ENCODE measurements at regions of chr7 and their contacts with region 1.

Region 1: GRCh38 chr7:55132890-55133551 is 114.2 kb downstream of the EGFR start:
- DNase-seq: peak; percentile 98 to 100
- H3K4me3 ChIP-seq: peak overlapping the region; percentile 39
- H3K27ac ChIP-seq: peak overlapping the region; percentile 92
- H3K4me1 ChIP-seq: peaks cover 77% of the 10 kb centered on the region
- H3K27me3 ChIP-seq: no peaks in the 10 kb centered on the region
- CTCF ChIP-seq: no peak

Region 2: GRCh38 chr7:54831644-54832099 is 301.3 kb before region 1 on chr7:
- CTCF ChIA-PET with region 1: no interaction called
- POLR2A ChIA-PET with region 1: interaction called, 5 read pairs
- intact Hi-C with region 1: loop called (anchors 1 kb)
- DNase-seq: peak; percentile 86 to 100
- H3K4me3 ChIP-seq: peak overlapping the region; percentile 39; the same call in 1 of the 2 replicates
- H3K27ac ChIP-seq: peak overlapping the region; percentile 94
- H3K4me1 ChIP-seq: peaks cover 45% of the 10 kb centered on the region
- H3K27me3 ChIP-seq: no peaks in the 10 kb centered on the region
- CTCF ChIP-seq: no peak; the same call in none of the 2 replicates

Region 3: DNA sequence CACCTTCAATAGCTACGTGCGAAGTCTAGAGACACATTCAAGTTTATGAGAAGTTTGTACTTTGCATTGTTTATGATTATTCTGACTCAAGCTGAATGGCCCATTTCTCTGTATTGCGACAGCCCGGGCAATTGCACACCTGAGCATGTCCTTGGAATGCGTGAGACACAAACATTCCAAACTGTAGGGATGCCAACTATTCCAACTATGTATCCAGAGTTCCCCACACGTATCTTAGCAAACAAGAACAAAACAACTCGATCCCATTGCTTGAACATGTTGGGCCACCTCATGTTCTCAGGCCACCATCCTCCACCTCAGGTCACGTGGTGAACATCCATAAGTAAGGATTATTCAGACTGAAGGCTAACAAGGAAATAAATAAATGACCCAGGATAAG is 165.6 kb before region 1 on chr7:
- CTCF ChIA-PET with region 1: no interaction called
- POLR2A ChIA-PET with region 1: interaction called, 6 read pairs
- intact Hi-C with region 1: loop called (anchors 1 kb)
- DNase-seq: peak; percentile 92 to 100
- H3K4me3 ChIP-seq: peak overlapping the region; percentile 2; the same call in 1 of the 2 replicates
- H3K27ac ChIP-seq: peak overlapping the region; percentile 89
- H3K4me1 ChIP-seq: peaks cover 50% of the 10 kb centered on the region
- H3K27me3 ChIP-seq: no peaks in the 10 kb centered on the region
- CTCF ChIP-seq: no peak

Region 4: GRCh38 chr7:55073945-55074499 is 59.0 kb before region 1 on chr7:
- CTCF ChIA-PET with region 1: interaction called, 4 read pairs
- POLR2A ChIA-PET with region 1: interaction called, 16 read pairs
- intact Hi-C with region 1: loop called (anchors 1 kb)
- DNase-seq: peak; percentile 94 to 100
- H3K4me3 ChIP-seq: peak overlapping the region; percentile 32; the same call in 1 of the 2 replicates
- H3K27ac ChIP-seq: peak overlapping the region; percentile 86
- H3K4me1 ChIP-seq: peaks cover 45% of the 10 kb centered on the region
- H3K27me3 ChIP-seq: no peaks in the 10 kb centered on the region
- CTCF ChIP-seq: no peak

Region 5: GRCh38 chr7:55120481-55121198 is 12.4 kb before region 1 on chr7:
- CTCF ChIA-PET with region 1: interaction called, 3 read pairs
- POLR2A ChIA-PET with region 1: interaction called, 24 read pairs
- intact Hi-C with region 1: loop called (anchors 1 kb)
- DNase-seq: peak; percentile 71 to 98
- H3K4me3 ChIP-seq: peak overlapping the region; percentile 3; the same call in 1 of the 2 replicates
- H3K27ac ChIP-seq: peak overlapping the region; percentile 79
- H3K4me1 ChIP-seq: peaks cover 77% of the 10 kb centered on the region
- H3K27me3 ChIP-seq: no peaks in the 10 kb centered on the region
- CTCF ChIP-seq: no peak

Region 6: GRCh38 chr7:55245271-55245723 is 112.3 kb after region 1 on chr7:
- CTCF ChIA-PET with region 1: no interaction called
- POLR2A ChIA-PET with region 1: no interaction called
- intact Hi-C with region 1: loop called (anchors 2 kb)
- DNase-seq: peak; percentile 63 to 72
- H3K4me3 ChIP-seq: no peak overlapping the region
- H3K27ac ChIP-seq: no peak overlapping the region
- H3K4me1 ChIP-seq: peaks cover 17% of the 10 kb centered on the region
- H3K27me3 ChIP-seq: no peaks in the 10 kb centered on the region
- CTCF ChIP-seq: no peak

Region 7: GRCh38 chr7:55288070-55288824 is 155.2 kb after region 1 on chr7:
- CTCF ChIA-PET with region 1: no interaction called
- POLR2A ChIA-PET with region 1: no interaction called
- intact Hi-C with region 1: no loop called
- DNase-seq: no peak
- H3K4me3 ChIP-seq: no peak overlapping the region
- H3K27ac ChIP-seq: no peak overlapping the region
- H3K4me1 ChIP-seq: no peaks in the 10 kb centered on the region
- H3K27me3 ChIP-seq: peaks cover 83% of the 10 kb centered on the region
- CTCF ChIP-seq: no peak

Measured in PC-9 (cell line).